AG04450 (cell line): ENCODE measurements at regions of chr5 and their contacts with region 1.

Region 1: DNA sequence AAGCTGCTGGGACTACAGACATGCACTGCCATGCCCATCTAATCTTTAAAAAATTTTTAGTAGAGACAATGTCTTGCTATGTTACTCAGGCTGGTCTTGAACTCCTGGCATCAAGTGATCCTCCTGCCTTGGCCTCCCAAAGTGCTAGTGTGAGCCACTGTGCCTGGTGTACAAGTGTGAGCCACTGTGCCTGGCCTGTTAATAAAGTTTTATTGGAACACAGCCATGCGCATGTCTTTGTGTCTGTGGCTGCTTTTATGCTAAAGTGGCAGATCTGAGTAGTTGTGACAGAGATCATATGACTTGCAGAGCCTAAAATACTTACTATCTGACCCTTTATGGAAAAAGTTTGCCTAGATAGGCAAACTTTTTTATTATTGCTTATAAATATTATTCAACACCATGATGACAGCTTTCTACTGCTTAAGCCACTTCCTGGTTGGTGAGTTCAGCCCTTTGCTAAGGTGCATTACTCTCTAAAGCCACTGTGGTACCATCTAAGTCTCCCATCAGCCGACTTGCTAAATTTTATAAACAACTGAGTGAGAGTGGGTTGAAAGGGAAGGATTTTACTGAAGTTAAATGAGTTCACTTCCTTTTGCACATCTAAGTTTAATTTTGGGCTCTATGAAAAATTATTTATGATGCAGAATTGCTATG is 133.5 kb downstream of the RASGRF2 start:
- DNase-seq: no peak
- H3K4me3 ChIP-seq: no peak overlapping the region
- H3K27ac ChIP-seq: no peak overlapping the region
- H3K27me3 ChIP-seq: no peaks in the 10 kb centered on the region
- CTCF ChIP-seq: no peak

Region 2: DNA sequence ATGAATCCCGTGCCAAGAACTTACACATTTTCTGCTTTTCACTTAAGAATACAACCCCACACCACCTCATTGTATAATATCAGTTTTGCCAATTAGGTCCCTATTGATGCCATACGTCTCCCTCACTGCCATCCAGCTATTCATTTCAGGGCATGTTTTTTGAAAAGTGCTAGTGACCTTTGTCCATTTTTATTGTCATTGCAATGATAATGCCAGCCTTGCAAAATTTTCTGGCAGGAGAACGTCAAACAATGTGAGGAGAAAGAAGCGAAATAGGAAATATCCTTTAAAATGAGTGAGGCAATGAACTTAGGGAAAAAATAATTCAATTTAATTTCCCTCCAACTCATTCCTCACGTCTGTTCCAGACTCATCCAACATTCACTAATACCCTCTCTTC is 27.6 kb after region 1 on chr5:
- CTCF ChIA-PET with region 1: interaction called, 12 read pairs
- POLR2A ChIA-PET with region 1: no interaction called
- DNase-seq: no peak
- H3K4me3 ChIP-seq: no peak overlapping the region
- H3K27ac ChIP-seq: no peak overlapping the region
- H3K27me3 ChIP-seq: no peaks in the 10 kb centered on the region
- CTCF ChIP-seq: no peak

Region 3: GRCh38 chr5:81140943-81141342 is 47.3 kb after region 1 on chr5:
- CTCF ChIA-PET with region 1: no interaction called
- POLR2A ChIA-PET with region 1: no interaction called
- DNase-seq: peak; percentile 32
- H3K4me3 ChIP-seq: no peak overlapping the region
- H3K27ac ChIP-seq: no peak overlapping the region
- H3K27me3 ChIP-seq: no peaks in the 10 kb centered on the region
- CTCF ChIP-seq: no peak